WTC11 (cell line): ENCODE measurements at regions of chr13 and their contacts with region 1.

Region 1: DNA sequence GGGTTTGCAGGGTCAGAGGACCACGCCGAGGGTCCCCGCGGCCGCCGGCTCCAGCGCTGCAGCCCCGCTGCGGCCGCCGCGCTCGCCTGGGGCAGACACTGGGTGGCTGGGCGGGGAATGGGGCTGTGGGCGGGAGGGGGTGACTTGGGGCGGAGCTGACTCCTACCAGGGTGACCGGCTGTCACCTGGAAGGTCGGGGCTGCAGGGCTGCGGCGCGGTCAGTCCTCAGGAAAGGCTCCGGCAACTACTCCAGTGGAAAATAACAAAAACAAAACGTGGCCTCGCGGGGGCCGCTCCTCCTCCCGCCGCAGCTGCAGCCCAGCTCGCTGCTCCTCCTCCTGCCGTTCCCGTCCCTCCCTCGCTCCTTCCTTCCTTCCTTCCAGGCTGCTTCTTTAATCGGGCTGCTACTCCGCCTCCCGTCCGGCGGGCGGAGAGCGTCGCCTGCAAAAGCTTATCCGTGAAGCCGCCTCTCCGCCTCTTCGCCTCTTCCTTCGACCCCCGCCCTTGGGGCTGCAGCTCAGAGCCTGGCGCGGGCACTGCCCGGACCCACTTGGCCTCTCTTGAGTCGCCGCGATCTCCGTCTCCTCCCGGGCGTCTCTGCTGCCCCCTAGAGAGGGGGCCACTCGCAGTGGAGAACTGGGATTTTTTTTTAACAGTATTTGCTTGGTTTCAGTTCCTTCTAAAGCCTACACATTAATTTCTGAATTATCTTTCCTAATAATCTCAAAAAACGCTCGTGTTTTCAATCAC is at the start of gene TBC1D4:
- DNase-seq: peak; percentile 93
- ATAC-seq: peak; percentile 82
- H3K4me3 Mint-ChIP-seq: peak within 1 kb of the TSS; percentile 90
- H3K27ac Mint-ChIP-seq: peak within 1 kb of the TSS; percentile 86
- H3K4me1 Mint-ChIP-seq: peaks cover 49% of the 10 kb centered on the region
- H3K27me3 Mint-ChIP-seq: no peaks in the 10 kb centered on the region
- CTCF ChIP-seq: peak; percentile 32
- total RNA-seq, gene TBC1D4: 30.1 to 37.1 TPM (median 30.4 TPM) in 3 replicates

Region 2: DNA sequence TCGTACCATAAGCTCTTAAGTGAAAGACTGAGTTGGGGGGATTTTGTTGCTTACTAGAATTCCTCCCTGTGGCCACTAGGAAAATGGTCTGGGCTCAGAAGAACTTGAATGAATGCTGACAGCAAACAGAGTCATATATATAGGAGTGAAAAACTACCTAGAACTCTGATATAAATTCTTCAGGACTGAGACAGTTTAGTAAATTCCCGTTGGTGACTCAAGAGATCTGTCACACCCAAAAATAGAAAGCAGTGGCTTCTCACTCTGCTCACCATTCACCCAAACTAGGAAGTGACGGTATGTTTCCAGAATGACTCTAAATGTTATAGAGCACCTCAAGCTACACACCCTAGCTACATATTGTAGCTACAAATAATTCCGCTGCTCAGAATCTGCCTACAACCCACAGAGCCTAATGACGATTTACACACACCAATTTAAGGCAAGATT is 116.5 kb before region 1 on chr13:
- CTCF ChIA-PET with region 1: interaction called, 10 read pairs
- POLR2A ChIA-PET with region 1: no interaction called
- DNase-seq: no peak
- ATAC-seq: no peak; the same call in 1 of the 2 replicates
- H3K4me3 Mint-ChIP-seq: no peak overlapping the region
- H3K27ac Mint-ChIP-seq: peak overlapping the region; percentile 55; the same call in 1 of the 2 replicates
- H3K4me1 Mint-ChIP-seq: peaks cover 27% of the 10 kb centered on the region
- H3K27me3 Mint-ChIP-seq: no peaks in the 10 kb centered on the region
- CTCF ChIP-seq: no peak

Region 3: GRCh38 chr13:75432045-75432444 is 50.2 kb before region 1 on chr13:
- CTCF ChIA-PET with region 1: interaction called, 12 read pairs
- POLR2A ChIA-PET with region 1: no interaction called
- DNase-seq: no peak
- ATAC-seq: peak; percentile 72
- H3K4me3 Mint-ChIP-seq: no peak overlapping the region
- H3K27ac Mint-ChIP-seq: 0 out of 2 replicates have a peak overlapping the region, but pooled peaks have one; percentile 6
- H3K4me1 Mint-ChIP-seq: peaks cover 14% of the 10 kb centered on the region
- H3K27me3 Mint-ChIP-seq: no peaks in the 10 kb centered on the region
- CTCF ChIP-seq: no peak

Region 4: GRCh38 chr13:75468098-75468497 is 14.1 kb before region 1 on chr13:
- CTCF ChIA-PET with region 1: interaction called, 16 read pairs
- POLR2A ChIA-PET with region 1: no interaction called
- DNase-seq: no peak
- ATAC-seq: no peak
- H3K4me3 Mint-ChIP-seq: no peak overlapping the region
- H3K27ac Mint-ChIP-seq: no peak overlapping the region
- H3K4me1 Mint-ChIP-seq: peaks cover 23% of the 10 kb centered on the region
- H3K27me3 Mint-ChIP-seq: no peaks in the 10 kb centered on the region; the same call in 1 of the 2 replicates
- CTCF ChIP-seq: no peak